ENCODE measurements at regions of chr15 and their contacts with region 1.

Region 1: DNA sequence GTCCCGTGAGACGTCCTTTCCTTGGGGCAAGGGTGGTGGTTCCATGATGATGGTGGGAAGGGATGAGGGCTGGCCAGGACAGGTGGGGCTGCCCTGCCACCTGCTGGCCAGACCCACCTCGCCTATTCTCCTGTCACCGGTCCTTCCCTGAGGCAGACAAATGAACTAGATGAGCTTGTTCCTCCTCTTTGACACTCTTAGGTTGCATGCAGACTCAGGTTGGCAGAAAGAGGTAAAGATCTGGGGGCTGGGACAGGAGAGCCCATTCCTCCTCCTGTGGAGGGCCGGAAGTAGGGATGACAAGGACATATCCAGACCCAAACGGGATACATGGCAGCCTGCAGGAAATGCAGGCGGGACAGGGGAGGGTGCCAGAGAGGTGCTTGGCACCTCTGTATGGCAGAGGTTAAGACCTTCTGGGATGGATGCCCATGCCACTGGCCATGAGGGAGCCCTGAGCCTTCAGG is 38.6 kb downstream of the ACSBG1 start:
- DNase-seq: peak; percentile 45
- ATAC-seq: peak; percentile 74

Region 2: DNA sequence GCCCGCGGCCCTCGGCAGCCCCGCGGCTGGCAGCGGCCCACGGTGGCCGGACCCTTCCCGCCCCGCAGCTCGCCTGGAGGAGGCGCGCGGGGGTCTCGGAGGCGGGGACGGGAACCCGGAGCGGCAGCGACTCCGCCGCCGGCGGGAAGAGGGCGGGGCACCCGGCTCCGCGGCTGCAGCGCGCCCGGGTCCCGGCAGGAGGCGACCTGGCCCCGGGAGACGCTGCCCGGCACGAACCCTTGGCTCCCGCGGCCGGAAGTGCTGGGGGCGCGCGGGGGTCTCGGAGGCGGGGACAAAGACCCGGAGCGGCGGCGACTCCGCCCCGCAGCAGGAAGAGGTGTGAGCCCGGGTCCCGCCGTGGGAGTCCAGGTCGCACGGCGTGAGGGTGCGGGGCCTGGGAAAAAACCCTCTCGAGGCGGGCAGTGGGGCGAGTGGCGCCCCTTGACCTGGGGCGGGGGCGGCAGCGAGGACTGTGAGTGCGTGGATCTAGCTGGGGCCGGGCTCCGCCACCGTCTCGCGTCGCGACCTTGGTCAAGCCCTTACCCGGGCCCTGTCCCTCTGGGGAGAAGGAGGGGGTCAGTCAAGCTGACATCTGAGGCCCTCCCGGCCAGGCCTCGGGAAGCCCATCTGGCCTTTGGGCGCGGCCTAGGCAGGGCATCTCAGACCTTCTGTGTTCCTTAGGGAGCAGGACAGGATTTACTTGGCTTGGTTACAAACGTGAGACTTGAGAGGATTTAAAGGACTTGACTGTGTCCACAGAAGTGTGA is 64.3 kb before region 1 on chr15 and contains the start of gene CIB2:
- intact Hi-C with region 1: loop called (anchors 10 kb)
- DNase-seq: peak; percentile 80
- ATAC-seq: peak; percentile 73
- total RNA-seq, gene CIB2: 5.4 TPM

Measured in sciatic nerve (tissue), 2 donors.